Mammary epithelial cell (primary cell): ENCODE measurements at regions of chr14 and their contacts with region 1.

Region 1: DNA sequence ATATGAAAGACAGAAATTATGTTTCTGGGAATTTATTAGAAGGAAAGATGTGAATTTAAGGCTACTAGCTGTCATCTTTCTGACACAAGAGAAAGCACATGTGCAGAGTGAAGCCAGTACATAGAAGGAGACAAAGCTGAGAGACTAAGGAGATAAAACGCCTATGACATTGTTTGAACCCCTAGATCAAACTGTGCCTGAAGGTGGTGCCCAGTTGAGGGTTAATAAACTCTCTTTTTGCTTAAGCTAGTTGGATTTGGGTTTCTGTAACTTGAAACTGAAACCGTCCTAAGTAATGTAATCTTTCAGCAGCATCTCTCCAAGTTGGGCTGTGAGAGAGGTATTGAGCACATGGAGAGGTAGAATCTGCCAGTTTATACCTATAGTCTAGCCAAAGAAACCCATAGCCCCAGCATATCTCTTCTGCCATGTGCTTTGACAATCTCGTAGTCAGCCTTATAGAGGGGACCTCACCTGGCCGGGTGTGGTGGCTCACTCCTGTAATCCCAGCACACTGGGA is 84.2 kb downstream of the LRRC74A start:
- DNase-seq: no peak
- H3K4me3 ChIP-seq: no peak overlapping the region
- H3K27ac ChIP-seq: no peak overlapping the region
- H3K4me1 ChIP-seq: peaks cover 27% of the 10 kb centered on the region
- H3K27me3 ChIP-seq: no peaks in the 10 kb centered on the region
- CTCF ChIP-seq: no peak

Region 2: DNA sequence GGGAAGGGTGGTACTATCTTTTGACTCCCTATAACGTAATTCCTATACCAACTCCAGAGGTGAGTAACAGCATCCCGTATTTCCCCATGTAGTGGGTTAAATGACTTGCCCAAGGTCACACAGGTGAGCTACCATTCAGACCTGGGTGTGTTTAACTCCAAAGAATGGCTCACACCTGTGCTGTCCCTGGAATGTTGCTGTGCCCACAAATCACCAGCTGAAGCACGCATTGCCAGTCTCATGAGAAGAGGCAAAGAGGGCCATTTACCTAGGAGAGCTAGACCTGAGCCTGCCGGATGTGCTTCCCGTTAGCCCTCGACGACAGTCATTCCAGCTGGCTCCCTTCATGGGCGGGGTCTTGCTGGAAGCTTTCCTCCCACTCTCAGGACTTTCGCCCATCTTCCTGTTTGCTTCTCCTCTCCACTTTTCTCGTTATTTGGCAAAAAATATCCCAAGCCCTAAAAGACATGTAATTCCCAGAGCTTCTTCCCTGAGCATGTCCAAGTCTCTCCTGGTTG is 255.8 kb before region 1 on chr14:
- CTCF ChIA-PET with region 1: no interaction called
- dilution Hi-C with region 1: no loop called
- in situ Hi-C with region 1: no loop called
- intact Hi-C with region 1: no loop called
- DNase-seq: peak; percentile 69
- H3K4me3 ChIP-seq: no peak overlapping the region
- H3K27ac ChIP-seq: no peak overlapping the region
- H3K4me1 ChIP-seq: peaks cover 5% of the 10 kb centered on the region
- H3K27me3 ChIP-seq: no peaks in the 10 kb centered on the region
- CTCF ChIP-seq: no peak

Region 3: GRCh38 chr14:77059276-77059915 is 149.0 kb after region 1 on chr14:
- CTCF ChIA-PET with region 1: no interaction called
- dilution Hi-C with region 1: no loop called
- in situ Hi-C with region 1: loop called (anchors 5 to 10 kb)
- intact Hi-C with region 1: no loop called
- DNase-seq: peak; percentile 49
- H3K4me3 ChIP-seq: no peak overlapping the region
- H3K27ac ChIP-seq: no peak overlapping the region
- H3K4me1 ChIP-seq: no peaks in the 10 kb centered on the region
- H3K27me3 ChIP-seq: no peaks in the 10 kb centered on the region
- CTCF ChIP-seq: no peak

Region 4: GRCh38 chr14:77151918-77152588 is 241.6 kb after region 1 on chr14:
- CTCF ChIA-PET with region 1: no interaction called
- dilution Hi-C with region 1: no loop called
- in situ Hi-C with region 1: no loop called
- intact Hi-C with region 1: no loop called
- DNase-seq: peak; percentile 20
- H3K4me3 ChIP-seq: no peak overlapping the region
- H3K27ac ChIP-seq: no peak overlapping the region
- H3K4me1 ChIP-seq: no peaks in the 10 kb centered on the region
- H3K27me3 ChIP-seq: no peaks in the 10 kb centered on the region
- CTCF ChIP-seq: peak; percentile 25 to 41

Region 5: GRCh38 chr14:77243853-77244252 is 333.4 kb after region 1 on chr14:
- CTCF ChIA-PET with region 1: no interaction called
- dilution Hi-C with region 1: no loop called
- in situ Hi-C with region 1: no loop called
- intact Hi-C with region 1: no loop called
- DNase-seq: no peak
- H3K4me3 ChIP-seq: no peak overlapping the region
- H3K27ac ChIP-seq: no peak overlapping the region
- H3K4me1 ChIP-seq: no peaks in the 10 kb centered on the region
- H3K27me3 ChIP-seq: no peaks in the 10 kb centered on the region
- CTCF ChIP-seq: no peak

Region 6: GRCh38 chr14:77498984-77499527 is 588.6 kb after region 1 on chr14:
- CTCF ChIA-PET with region 1: no interaction called
- dilution Hi-C with region 1: no loop called
- in situ Hi-C with region 1: no loop called
- intact Hi-C with region 1: no loop called
- DNase-seq: no peak
- H3K4me3 ChIP-seq: peak overlapping the region in 2 of 3 experiments; percentile 46 to 55
- H3K27ac ChIP-seq: no peak overlapping the region
- H3K4me1 ChIP-seq: peaks cover 12% of the 10 kb centered on the region
- H3K27me3 ChIP-seq: peaks cover 6% of the 10 kb centered on the region
- CTCF ChIP-seq: no peak